Right ventricle myocardium inferior (tissue), 1 donor: ENCODE measurements at regions of chr7 and their contacts with region 1.

Region 1: GRCh38 chr7:148503875-148504487 is 86.6 kb upstream of the C7orf33 start:
- DNase-seq: no peak
- ATAC-seq: no peak

Region 2: DNA sequence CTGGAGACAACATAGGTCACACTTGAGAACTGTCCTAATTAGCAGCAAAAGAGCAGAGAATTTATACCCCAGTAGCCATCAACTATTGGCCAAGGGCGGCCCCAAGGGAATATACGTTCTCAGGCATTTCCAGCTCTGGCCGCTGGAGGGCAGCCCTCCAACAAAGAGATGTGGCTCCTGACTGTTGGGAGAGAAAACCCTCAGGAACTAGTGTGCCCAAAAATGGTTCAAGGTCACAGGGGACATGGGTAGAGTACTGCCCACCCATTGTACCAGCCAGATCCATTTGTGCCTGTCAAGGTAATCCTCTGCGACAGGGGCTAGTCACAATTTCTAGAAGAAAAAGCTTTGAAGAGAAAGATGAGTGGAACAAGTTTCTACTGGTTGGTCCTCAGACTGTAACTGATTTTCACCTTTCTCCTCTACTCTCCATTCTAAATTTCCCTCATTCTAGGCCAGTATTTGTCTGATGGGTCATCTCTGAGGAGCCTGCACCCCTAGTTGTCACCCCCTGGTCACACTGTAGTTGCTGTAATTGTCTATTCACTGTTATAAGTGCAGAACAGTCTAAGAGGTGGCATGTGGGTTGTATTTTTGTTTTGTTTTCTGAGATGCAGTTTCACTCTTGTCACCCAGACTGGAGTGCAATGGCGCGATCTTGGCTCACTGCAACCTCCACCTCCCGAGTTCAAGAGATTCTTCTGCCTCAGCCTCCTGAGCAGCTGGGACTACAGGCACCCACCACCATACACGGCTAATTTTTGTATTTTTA is 71.8 kb after region 1 on chr7:
- intact Hi-C with region 1: loop called (anchors 10 kb)
- DNase-seq: peak; percentile 77
- ATAC-seq: peak; percentile 52